Right ventricle myocardium inferior (tissue), 1 donor: ENCODE measurements at regions of chr15 and their contacts with region 1.

Region 1: DNA sequence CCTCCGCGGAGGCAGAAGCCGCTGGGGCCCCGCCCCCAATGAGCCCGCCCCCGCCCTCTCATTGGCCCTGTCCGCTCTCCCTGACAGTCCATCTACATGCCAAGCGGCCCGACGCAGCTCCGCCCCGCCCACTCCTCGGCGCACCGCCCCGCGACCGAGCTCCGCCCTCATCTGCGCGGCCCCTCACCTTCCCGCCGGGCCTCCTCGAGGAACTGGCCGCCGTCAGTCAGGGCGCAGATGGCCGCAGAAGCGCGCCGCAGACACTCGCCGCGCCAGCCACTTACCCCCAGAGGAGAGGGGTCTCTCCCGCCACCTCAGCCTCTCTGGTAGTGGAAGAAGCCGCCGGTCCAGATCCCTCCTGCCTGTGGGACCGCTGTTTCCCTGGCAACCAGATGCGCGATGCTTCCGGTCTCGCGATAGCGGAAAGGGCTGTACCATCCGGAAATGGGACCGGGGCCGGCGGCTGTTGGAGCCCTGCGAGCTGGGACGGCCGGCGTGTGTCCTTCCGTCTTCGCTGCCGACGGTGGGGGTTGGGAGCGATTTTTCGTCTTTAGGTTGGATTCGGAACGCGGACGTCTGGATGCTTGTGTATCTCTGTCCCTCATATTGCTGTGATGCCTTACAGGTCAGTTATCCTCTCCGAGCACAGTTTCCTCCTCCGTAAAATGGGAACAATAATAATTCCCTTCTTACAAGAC is at the start of gene FSIP1:
- DNase-seq: peak; percentile 98
- ATAC-seq: peak; percentile 99
- total RNA-seq, gene FSIP1: 0.73 TPM

Region 2: GRCh38 chr15:39874890-39875549 is 92.4 kb after region 1 on chr15:
- intact Hi-C with region 1: loop called (anchors 5 kb)
- DNase-seq: no peak
- ATAC-seq: no peak

Region 3: GRCh38 chr15:39896846-39897245 is 114.3 kb after region 1 on chr15:
- intact Hi-C with region 1: no loop called
- DNase-seq: no peak
- ATAC-seq: no peak

Region 4: GRCh38 chr15:39934397-39935071 is 151.9 kb after region 1 on chr15:
- intact Hi-C with region 1: loop called (anchors 5 kb)
- DNase-seq: no peak
- ATAC-seq: peak; percentile 1

Region 5: GRCh38 chr15:39976291-39977274 is 194.0 kb after region 1 on chr15:
- intact Hi-C with region 1: loop called (anchors 5 kb)
- DNase-seq: peak; percentile 86
- ATAC-seq: peak; percentile 91

Region 6: GRCh38 chr15:40038638-40039543 is 256.3 kb after region 1 on chr15 and contains the start of gene SRP14:
- intact Hi-C with region 1: loop called (anchors 5 kb)
- DNase-seq: peak; percentile 97
- ATAC-seq: peak; percentile 98
- total RNA-seq, gene SRP14: 232 TPM

Region 7: DNA sequence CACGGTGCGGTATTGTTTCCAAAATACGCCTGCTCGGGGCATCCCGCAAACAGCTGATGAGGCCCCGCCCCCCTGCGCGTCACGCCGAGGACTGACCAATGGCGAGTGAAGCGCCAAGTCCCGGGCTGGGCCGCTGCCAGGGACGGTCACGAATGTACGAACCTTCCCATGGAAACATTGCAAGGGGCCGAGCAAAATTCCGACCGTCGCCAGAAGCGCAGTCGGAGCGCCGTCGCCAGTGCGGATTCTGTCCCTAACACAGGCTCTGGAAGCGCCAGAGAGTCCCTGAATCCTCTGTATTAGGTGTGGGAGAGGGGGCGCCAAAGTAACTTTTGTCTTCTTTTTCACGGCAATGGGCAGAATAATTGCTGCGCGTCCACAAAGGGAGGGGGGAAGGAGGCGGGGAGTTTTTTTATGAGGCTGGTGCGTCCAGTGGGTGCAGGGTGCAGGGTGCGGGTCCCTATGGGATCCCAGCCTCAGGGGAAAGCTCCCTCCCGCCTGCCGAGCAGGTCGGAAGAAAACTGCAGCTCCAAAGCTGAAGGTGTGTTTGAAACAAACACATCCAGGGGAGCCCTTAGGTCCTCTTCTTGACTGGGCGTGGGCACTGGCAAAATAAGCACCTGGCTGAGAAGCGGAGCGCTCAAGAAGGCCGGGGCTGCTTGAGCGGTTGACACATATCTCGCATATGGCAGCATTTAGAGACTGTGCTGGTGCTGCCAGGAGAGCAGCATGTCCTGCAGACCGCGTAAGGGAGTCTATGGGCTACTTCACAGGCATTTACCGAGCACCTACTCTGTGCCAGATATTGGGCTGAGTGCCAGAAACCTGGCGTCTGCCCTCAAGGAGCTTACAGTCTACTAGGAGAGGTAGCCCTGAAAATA is 326.5 kb after region 1 on chr15 and contains the start of gene BMF:
- intact Hi-C with region 1: loop called (anchors 5 kb)
- DNase-seq: peak; percentile 100
- ATAC-seq: peak; percentile 80
- total RNA-seq, gene BMF: 3.2 TPM